ENCODE measurements at regions of chr10 and their contacts with region 1.

Region 1: DNA sequence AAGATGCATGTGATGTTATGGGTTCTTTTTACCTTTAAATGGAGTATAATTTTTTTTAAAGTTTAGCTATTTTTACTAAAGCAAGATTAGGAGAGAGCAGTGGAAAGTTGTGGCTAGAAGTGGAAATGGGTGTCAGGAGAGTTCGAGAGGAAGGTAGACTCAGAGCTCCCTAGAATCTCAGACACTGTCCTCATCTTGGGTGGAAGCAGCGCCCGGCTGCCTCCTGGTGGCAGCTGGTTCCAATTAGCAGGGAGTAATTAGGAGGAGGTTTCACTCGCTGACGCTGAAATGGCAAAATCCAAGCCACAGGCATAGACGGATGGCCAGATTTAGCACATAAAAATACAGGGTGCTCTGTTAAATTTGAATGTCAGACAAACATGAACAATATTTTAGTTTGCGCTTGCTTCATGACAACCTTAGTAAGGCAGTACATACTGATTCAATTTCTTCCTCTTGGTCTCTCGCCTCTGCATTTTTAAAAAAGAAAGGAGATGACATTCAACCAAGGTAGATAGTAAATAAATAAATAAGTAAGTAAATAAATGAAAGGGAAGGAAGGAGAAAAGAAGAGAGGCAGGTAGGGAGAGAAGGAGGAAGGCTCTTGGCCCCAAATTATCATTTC is 58.5 kb downstream of the LGI1 start:
- DNase-seq: peak; percentile 39 to 56
- ATAC-seq: peak in 7 of 8 donors; percentile 77 to 90 (median 81)
- H3K4me3 ChIP-seq: peak overlapping the region in 1 of 10 donors; percentile 8
- H3K27ac ChIP-seq: no peak overlapping the region
- H3K4me1 ChIP-seq: peaks cover 0 to 10% (median 4%) of the 10 kb centered on the region in 9 donors
- H3K27me3 ChIP-seq: peaks cover 0 to 47% (median 13%) of the 10 kb centered on the region in 7 donors
- CTCF ChIP-seq: peak; percentile 27 to 76 (median 65)

Region 2: DNA sequence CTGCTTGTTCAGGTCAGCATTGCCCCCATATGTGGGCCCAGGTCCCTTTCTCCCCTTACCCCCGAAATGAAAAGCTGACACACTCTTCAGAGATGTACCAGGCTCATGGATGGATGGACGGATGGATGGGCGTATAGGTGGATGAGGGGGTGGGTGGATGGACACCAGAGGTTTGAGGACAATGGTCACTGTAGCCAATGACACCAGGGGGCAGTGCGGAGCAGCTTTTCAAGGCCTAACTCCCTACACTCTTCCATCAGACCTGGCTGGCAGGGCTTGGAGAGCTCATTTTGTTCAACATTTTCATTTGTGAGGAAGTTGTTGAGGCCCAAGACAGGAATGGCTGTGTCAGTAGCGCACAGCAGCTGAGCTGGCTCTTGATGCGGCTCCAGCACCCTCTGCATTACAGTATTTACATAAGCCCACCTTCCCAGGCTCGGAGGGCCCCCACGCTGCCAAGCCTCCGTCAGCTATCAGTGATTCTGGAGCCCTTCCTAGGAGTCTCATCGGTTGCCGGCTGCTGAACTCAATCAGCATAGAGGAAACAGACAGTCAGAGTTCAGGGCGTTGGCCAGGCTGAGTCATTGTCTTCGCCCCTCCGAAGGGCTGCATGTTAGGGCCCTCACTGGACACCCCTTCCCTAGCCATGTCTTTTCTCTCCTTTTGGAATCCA is 261.3 kb before region 1 on chr10:
- intact Hi-C with region 1: loop called in 1 of 10 experiments (anchors 10 kb)
- DNase-seq: peak; percentile 66 to 70
- ATAC-seq: peak; percentile 65 to 91 (median 86)
- H3K4me3 ChIP-seq: no peak overlapping the region
- H3K27ac ChIP-seq: peak overlapping the region in 1 of 10 donors; percentile 21
- H3K4me1 ChIP-seq: peaks cover 0 to 5% (median 0%) of the 10 kb centered on the region in 9 donors
- H3K27me3 ChIP-seq: no peaks in the 10 kb centered on the region
- CTCF ChIP-seq: peak; percentile 44 to 80 (median 67)

Region 3: DNA sequence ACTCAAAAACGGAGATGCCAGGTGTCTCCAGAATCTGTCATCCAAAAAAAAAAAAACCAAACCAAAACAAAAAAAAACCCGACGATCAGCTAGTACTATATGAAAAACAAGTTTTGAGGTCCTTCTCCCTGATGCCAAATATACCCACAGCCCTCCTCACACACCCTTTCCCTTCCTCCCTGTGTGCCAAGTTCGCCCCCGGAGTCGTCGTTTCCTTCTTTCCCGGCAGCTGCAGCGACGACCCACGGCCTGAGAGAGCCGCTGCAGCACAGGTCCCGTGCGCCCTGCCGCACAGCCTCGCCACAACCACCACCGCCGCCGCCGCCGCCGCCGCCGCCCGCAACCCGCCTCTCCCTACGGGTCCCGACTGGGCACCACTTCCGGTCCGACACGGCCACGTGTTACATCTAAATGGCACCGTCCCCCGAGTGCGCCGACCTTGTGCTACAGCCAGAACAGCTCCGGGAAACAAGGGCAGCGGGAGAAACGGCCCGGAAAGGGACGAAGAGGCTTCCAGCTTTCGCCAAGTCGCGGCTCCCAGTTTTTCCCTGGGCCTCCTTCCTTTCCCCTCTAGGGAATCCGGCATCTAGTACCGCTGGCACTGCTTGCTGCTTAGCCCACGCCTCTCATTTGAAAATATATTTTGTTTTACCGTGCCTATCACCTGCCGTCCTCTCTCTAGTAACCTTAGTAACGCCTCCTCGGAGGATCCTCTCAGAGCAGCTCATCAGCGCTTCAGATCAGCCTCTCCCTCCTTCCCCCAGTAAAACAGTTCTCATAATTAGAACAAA is 113.8 kb before region 1 on chr10 and contains the start of gene FRA10AC1:
- intact Hi-C with region 1: loop called in 5 of 10 experiments (anchors 5 to 10 kb)
- DNase-seq: peak; percentile 92 to 93
- ATAC-seq: peak; percentile 98 to 100 (median 98)
- H3K4me3 ChIP-seq: peak within 1 kb of the TSS; percentile 49 to 93 (median 70)
- H3K27ac ChIP-seq: peak within 1 kb of the TSS; percentile 42 to 95 (median 85)
- H3K4me1 ChIP-seq: peaks cover 0 to 27% (median 15%) of the 10 kb centered on the region in 9 donors
- H3K27me3 ChIP-seq: no peaks in the 10 kb centered on the region
- CTCF ChIP-seq: peak in 7 of 9 donors; percentile 11 to 66 (median 51)
- total RNA-seq, gene FRA10AC1: 7.7 to 24.5 (median 15.5) TPM

Region 4: DNA sequence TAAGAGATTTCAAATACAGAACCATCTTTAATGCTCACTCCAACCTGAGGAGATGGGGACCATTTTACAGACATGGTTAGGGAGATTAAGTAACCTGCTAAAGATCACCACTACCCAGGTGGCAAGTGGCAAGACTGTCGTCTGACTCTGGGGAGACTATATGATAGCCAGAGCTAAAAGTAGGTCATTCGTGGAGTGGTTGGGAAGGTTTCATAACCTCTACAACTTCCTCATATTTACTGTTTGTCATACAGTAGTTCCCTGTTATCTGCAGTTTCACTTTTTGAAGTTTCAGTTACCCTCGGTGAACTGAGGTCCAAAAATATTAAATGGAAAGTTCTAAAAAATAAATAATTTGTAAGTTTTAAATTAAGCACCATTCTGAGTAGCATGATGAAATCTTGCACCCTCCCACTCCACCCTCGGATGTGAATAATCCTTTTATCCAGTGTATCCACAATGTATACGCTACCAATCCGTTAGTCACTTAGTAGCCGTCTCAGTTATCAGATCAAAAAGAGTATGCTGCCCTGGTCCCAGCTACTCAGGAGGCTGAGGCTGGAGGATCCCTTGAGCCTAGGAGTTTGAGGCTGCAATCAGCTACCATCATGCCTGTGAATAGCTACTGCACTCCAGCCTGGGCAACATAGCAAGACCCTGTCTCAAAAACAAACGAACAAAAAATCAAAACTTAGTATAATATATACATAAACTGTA is 73.4 kb before region 1 on chr10:
- intact Hi-C with region 1: loop called in 1 of 10 experiments (anchors 5 kb)
- DNase-seq: no peak
- ATAC-seq: peak in 3 of 8 donors; percentile 38 to 64 (median 47)
- H3K4me3 ChIP-seq: peak overlapping the region in 1 of 10 donors; percentile 39
- H3K27ac ChIP-seq: peak overlapping the region in 1 of 10 donors; percentile 36
- H3K4me1 ChIP-seq: peaks cover 0 to 28% (median 0%) of the 10 kb centered on the region in 9 donors
- H3K27me3 ChIP-seq: peaks cover 0 to 5% (median 0%) of the 10 kb centered on the region in 7 donors
- CTCF ChIP-seq: no peak

Region 5: DNA sequence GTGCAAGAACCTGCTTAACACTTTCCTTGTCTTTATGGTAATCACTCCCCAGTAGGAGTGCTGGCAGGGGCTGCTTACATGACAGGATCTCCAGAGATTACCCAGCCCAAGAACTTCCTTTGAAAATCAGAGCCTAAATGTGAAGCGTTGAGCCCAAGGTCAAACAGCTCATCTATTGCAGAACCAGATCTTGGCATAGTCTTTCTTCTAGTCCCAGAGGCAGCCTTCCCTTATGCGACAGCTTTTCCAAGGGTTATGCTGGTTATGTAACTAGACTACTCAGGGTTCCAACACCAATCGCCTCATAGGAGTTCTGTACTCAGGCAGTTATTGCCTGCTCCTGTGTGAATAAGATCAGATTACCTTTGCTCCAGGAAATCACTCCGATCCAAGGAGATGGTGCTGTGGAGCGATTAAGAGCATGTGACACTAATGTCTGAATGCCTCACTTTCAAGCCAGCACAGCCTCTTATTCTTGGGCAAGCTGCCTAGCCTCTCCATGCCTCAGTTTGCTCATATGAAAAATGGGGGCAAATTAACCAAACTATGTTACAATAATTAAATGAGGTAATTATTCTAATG is 66.9 kb before region 1 on chr10:
- intact Hi-C with region 1: loop called in 2 of 10 experiments (anchors 2 to 5 kb)
- DNase-seq: no peak
- ATAC-seq: peak in 1 of 8 donors; percentile 39
- H3K4me3 ChIP-seq: no peak overlapping the region
- H3K27ac ChIP-seq: no peak overlapping the region
- H3K4me1 ChIP-seq: peaks cover 0 to 25% (median 4%) of the 10 kb centered on the region in 9 donors
- H3K27me3 ChIP-seq: peaks cover 0 to 11% (median 9%) of the 10 kb centered on the region in 7 donors
- CTCF ChIP-seq: no peak

Region 6: GRCh38 chr10:94320285-94320914 is 504.2 kb after region 1 on chr10:
- intact Hi-C with region 1: loop called in 1 of 10 experiments (anchors 10 kb)
- DNase-seq: peak; percentile 48 to 69
- ATAC-seq: peak in 3 of 8 donors; percentile 43 to 59 (median 47)
- H3K4me3 ChIP-seq: no peak overlapping the region
- H3K27ac ChIP-seq: no peak overlapping the region
- H3K4me1 ChIP-seq: peaks cover 0 to 17% (median 0%) of the 10 kb centered on the region in 9 donors
- H3K27me3 ChIP-seq: no peaks in the 10 kb centered on the region
- CTCF ChIP-seq: peak; percentile 83 to 93 (median 86)

Region 7: GRCh38 chr10:94439275-94439861 is 623.1 kb after region 1 on chr10:
- intact Hi-C with region 1: loop called in 1 of 10 experiments (anchors 10 kb)
- DNase-seq: no peak
- ATAC-seq: peak in 5 of 8 donors; percentile 27 to 65 (median 55)
- H3K4me3 ChIP-seq: no peak overlapping the region
- H3K27ac ChIP-seq: no peak overlapping the region
- H3K4me1 ChIP-seq: peaks cover 0 to 29% (median 8%) of the 10 kb centered on the region in 9 donors
- H3K27me3 ChIP-seq: no peaks in the 10 kb centered on the region
- CTCF ChIP-seq: peak in 1 of 9 donors; percentile 9